PC-3 (cell line): ENCODE measurements at regions of chrX and their contacts with region 1.

Region 1: GRCh38 chrX:1932231-1932630 is 317.4 kb downstream of the ASMT start:
- DNase-seq: peak; percentile 81
- ATAC-seq: peak; percentile 95
- H3K4me3 ChIP-seq: no peak overlapping the region
- H3K27ac ChIP-seq: peak overlapping the region; percentile 78
- H3K4me1 ChIP-seq: peaks cover 5% of the 10 kb centered on the region
- H3K27me3 ChIP-seq: no peaks in the 10 kb centered on the region
- CTCF ChIP-seq: no peak

Region 2: GRCh38 chrX:1903236-1903935 is 28.8 kb before region 1 on chrX:
- CTCF ChIA-PET with region 1: no interaction called
- POLR2A ChIA-PET with region 1: no interaction called
- intact Hi-C with region 1: loop called (anchors 1 kb)
- DNase-seq: peak; percentile 95
- ATAC-seq: peak; percentile 89
- H3K4me3 ChIP-seq: peak overlapping the region; percentile 65
- H3K27ac ChIP-seq: peak overlapping the region; percentile 100
- H3K4me1 ChIP-seq: peaks cover 17% of the 10 kb centered on the region
- H3K27me3 ChIP-seq: no peaks in the 10 kb centered on the region
- CTCF ChIP-seq: no peak

Region 3: DNA sequence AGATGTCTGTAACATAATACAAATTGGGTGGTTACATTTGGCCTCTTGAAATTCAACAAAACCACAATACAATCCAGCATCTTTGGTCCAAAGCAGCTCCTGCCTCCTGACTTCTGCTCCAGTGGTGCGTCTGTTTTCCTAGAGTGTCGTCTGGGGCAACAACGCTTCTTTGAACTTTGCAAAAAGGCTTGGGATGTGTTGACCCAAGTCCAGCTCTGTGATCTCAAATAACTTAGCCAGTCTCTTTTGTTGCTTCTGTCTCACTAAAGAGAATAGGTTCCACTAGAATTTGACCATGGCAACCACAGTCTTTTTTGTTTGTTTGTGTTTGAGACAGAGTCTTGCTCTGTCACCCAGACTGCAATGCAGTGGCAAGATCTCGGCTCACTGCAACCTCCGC is 244.5 kb after region 1 on chrX:
- CTCF ChIA-PET with region 1: no interaction called
- POLR2A ChIA-PET with region 1: no interaction called
- intact Hi-C with region 1: loop called (anchors 1 kb)
- DNase-seq: no peak
- ATAC-seq: no peak
- H3K4me3 ChIP-seq: no peak overlapping the region
- H3K27ac ChIP-seq: no peak overlapping the region
- H3K4me1 ChIP-seq: no peaks in the 10 kb centered on the region
- H3K27me3 ChIP-seq: no peaks in the 10 kb centered on the region
- CTCF ChIP-seq: no peak